ENCODE measurements at regions of chr10 and their contacts with region 1.

Region 1: GRCh38 chr10:122565728-122566206 is 5.2 kb downstream of the DMBT1 start:
- DNase-seq: peak in 2 of 3 donors; percentile 85 to 92
- ATAC-seq: peak; percentile 77
- H3K4me3 ChIP-seq: no peak overlapping the region
- H3K4me1 ChIP-seq: no peaks in the 10 kb centered on the region
- CTCF ChIP-seq: peak; percentile 72

Region 2: DNA sequence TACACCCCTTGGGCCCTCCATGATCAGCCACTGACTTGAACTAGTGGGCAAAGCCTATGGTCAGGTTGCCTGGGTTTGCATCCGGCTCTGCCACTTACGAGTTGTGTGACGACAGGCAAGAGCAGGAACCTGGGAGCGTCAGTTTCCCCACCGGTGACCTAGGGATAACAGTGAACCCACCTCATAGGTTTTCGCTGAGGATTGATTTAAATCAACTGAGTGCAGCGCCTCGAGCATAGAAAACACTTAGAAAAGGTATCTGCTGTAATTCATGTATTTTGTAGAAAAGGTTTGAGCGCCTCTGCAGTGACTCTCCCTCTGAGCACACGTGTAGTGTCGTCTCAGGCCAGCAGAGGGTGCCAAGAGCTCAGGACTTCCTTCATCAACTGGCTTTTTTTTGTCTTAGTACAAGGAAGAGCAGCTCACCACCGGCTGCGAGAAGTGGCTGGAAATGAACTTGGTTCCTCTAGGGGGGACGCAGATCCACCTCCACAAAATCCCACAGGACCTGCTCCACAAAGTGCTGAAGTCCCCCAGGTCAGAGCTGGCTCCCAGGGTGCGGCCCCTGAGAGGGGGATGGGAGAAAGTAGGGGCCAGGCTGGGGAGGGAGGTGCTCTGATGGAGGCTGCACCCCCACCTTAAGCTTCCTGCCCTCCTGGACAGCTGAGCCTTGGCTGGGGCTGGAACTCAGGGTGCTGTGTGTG is 267.0 kb before region 1 on chr10:
- intact Hi-C with region 1: loop called in 1 of 2 experiments (anchors 5 kb)
- DNase-seq: peak in 2 of 3 donors; percentile 81 to 84
- ATAC-seq: peak; percentile 96
- H3K4me3 ChIP-seq: no peak overlapping the region
- H3K4me1 ChIP-seq: peaks cover 6% of the 10 kb centered on the region
- CTCF ChIP-seq: peak; percentile 85

Region 3: GRCh38 chr10:122459561-122460273 is 106.0 kb before region 1 on chr10:
- intact Hi-C with region 1: loop called in 1 of 2 experiments (anchors 10 kb)
- DNase-seq: no peak
- ATAC-seq: no peak
- H3K4me3 ChIP-seq: no peak overlapping the region
- H3K4me1 ChIP-seq: peaks cover 15% of the 10 kb centered on the region
- CTCF ChIP-seq: no peak

Region 4: GRCh38 chr10:122495406-122496340 is 70.1 kb before region 1 on chr10:
- intact Hi-C with region 1: no loop called
- DNase-seq: no peak
- ATAC-seq: no peak
- H3K4me3 ChIP-seq: no peak overlapping the region
- H3K4me1 ChIP-seq: no peaks in the 10 kb centered on the region
- CTCF ChIP-seq: no peak

Region 5: DNA sequence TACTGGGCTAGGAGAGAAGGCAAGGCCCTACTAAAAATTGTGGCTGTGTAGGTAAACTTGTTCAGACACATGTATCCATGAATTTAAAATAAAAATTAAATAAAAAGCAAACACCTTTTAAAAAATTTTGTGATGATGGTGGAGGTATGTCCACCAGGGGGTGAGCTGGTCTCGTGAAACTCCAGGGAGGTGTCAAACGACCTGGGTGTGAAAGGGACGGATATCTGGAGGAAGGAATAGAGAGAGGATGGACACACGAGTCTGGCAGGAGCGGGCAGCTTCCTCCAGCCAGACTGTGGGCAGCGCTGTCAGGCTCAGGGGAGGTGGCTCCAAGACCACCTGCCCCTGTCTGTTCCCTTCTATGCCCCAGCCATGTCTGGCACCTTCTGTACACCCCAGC is 40.0 kb before region 1 on chr10:
- intact Hi-C with region 1: loop called in 1 of 2 experiments (anchors 5 kb)
- DNase-seq: peak in 2 of 3 donors; percentile 55 to 76
- ATAC-seq: peak; percentile 93
- H3K4me3 ChIP-seq: no peak overlapping the region
- H3K4me1 ChIP-seq: no peaks in the 10 kb centered on the region
- CTCF ChIP-seq: no peak